GM12878 (cell line): ENCODE measurements at regions of chr2 and their contacts with region 1.

Region 1: GRCh38 chr2:165410276-165410675 is 59.2 kb upstream of the CSRNP3 start:
- DNase-seq: no peak
- ATAC-seq: no peak
- H3K4me3 ChIP-seq: no peak overlapping the region
- H3K27ac ChIP-seq: no peak overlapping the region
- H3K4me1 ChIP-seq: no peaks in the 10 kb centered on the region
- H3K27me3 ChIP-seq: no peaks in the 10 kb centered on the region
- CTCF ChIP-seq: no peak
- EP300 ChIP-seq: no peak
- POLR2A ChIP-seq: no peak
- RAD21 ChIP-seq: no peak

Region 2: DNA sequence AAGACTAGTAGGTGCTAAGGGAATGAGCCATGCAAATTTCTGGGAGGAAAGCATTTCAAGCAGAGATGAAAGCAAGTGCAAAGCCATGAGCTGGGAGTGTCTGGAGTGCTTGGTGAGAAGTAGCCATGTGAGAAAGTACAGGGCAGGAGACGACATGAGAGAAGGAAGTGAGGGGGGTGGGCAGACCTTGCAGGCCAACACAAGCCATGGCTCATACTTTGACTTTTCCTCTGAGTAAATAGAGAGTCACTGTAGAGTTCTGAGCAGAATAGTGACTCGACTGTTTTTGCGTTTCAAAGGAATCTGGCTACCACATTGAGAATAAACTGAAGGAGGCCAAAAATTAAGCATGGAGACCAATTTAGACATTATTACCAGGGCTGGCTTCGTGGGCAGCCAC is 128.9 kb before region 1 on chr2:
- CTCF ChIA-PET with region 1: no interaction called
- POLR2A ChIA-PET with region 1: no interaction called
- RAD21 ChIA-PET with region 1: no interaction called
- SMC1A ChIA-PET with region 1: no interaction called
- in situ Hi-C with region 1: no loop called
- intact Hi-C with region 1: no loop called
- DNase-seq: no peak
- ATAC-seq: no peak
- H3K4me3 ChIP-seq: no peak overlapping the region
- H3K27ac ChIP-seq: no peak overlapping the region
- H3K4me1 ChIP-seq: no peaks in the 10 kb centered on the region
- H3K27me3 ChIP-seq: no peaks in the 10 kb centered on the region
- CTCF ChIP-seq: no peak
- EP300 ChIP-seq: no peak
- POLR2A ChIP-seq: no peak
- RAD21 ChIP-seq: no peak

Region 3: GRCh38 chr2:165390875-165391274 is 19.4 kb before region 1 on chr2:
- CTCF ChIA-PET with region 1: no interaction called
- POLR2A ChIA-PET with region 1: no interaction called
- RAD21 ChIA-PET with region 1: no interaction called
- SMC1A ChIA-PET with region 1: no interaction called
- in situ Hi-C with region 1: no loop called
- intact Hi-C with region 1: no loop called
- DNase-seq: no peak
- ATAC-seq: no peak
- H3K4me3 ChIP-seq: no peak overlapping the region
- H3K27ac ChIP-seq: no peak overlapping the region
- H3K4me1 ChIP-seq: no peaks in the 10 kb centered on the region
- H3K27me3 ChIP-seq: no peaks in the 10 kb centered on the region
- CTCF ChIP-seq: no peak
- EP300 ChIP-seq: no peak
- POLR2A ChIP-seq: no peak
- RAD21 ChIP-seq: no peak

Region 4: DNA sequence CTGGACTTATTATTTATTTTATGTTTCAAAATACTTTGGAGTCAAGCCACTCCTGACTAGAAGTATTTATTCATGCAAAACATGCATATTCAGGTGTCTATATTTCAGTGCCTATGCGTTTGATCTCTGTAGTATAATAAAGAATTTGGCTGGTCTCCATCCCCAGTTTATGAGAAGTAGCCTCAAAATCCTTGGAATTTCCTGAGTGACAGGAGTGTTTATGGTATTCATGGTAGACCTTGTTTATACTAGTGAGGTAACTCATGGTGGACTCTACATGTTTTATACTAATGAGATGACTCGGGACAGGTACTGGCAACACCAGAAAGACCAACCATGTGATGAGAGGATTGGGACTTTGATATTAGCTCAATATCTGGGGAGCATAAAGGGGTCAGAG is 15.3 kb after region 1 on chr2:
- CTCF ChIA-PET with region 1: interaction called, 3 read pairs
- POLR2A ChIA-PET with region 1: no interaction called
- RAD21 ChIA-PET with region 1: no interaction called
- SMC1A ChIA-PET with region 1: interaction called, 11 read pairs
- in situ Hi-C with region 1: no loop called
- intact Hi-C with region 1: no loop called
- DNase-seq: no peak
- ATAC-seq: no peak
- H3K4me3 ChIP-seq: no peak overlapping the region
- H3K27ac ChIP-seq: no peak overlapping the region
- H3K4me1 ChIP-seq: no peaks in the 10 kb centered on the region
- H3K27me3 ChIP-seq: no peaks in the 10 kb centered on the region
- CTCF ChIP-seq: no peak
- EP300 ChIP-seq: no peak
- POLR2A ChIP-seq: no peak
- RAD21 ChIP-seq: no peak

Region 5: DNA sequence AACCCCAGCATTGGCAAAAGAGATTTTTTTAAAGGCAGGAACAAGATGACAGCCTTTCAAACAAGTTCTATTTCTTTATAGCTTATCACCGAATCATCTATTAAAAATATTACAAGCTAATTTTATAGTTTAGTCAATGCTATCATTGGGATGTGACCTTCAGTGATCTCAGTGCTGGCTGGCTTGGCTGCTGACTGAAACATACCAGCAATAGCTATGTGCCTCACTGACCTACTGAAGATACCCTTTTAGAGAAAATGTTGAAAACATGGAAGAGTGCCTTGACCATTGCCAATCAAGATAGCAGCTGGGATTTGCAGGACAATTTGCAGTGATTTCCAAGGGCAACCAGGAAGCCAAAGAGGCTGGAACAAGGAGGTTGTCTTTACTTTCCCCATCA is 103.2 kb after region 1 on chr2:
- CTCF ChIA-PET with region 1: no interaction called
- POLR2A ChIA-PET with region 1: no interaction called
- RAD21 ChIA-PET with region 1: no interaction called
- SMC1A ChIA-PET with region 1: no interaction called
- in situ Hi-C with region 1: no loop called
- intact Hi-C with region 1: no loop called
- DNase-seq: no peak
- ATAC-seq: no peak
- H3K4me3 ChIP-seq: no peak overlapping the region
- H3K27ac ChIP-seq: no peak overlapping the region
- H3K4me1 ChIP-seq: no peaks in the 10 kb centered on the region
- H3K27me3 ChIP-seq: no peaks in the 10 kb centered on the region
- CTCF ChIP-seq: no peak
- EP300 ChIP-seq: no peak
- POLR2A ChIP-seq: no peak
- RAD21 ChIP-seq: no peak